ENCODE measurements at regions of chr9 and their contacts with region 1.

Region 1: GRCh38 chr9:134407123-134407808 is 81.0 kb downstream of the RXRA start:
- DNase-seq: peak; percentile 66 to 94
- H3K4me3 ChIP-seq: peak overlapping the region; percentile 27 to 54
- H3K27ac ChIP-seq: peak overlapping the region; percentile 74 to 82
- H3K4me1 ChIP-seq: peaks cover 58 to 77% of the 10 kb centered on the region in 2 donors
- H3K27me3 ChIP-seq: no peaks in the 10 kb centered on the region
- CTCF ChIP-seq: no peak

Region 2: GRCh38 chr9:134205672-134206310 is 201.5 kb before region 1 on chr9:
- intact Hi-C with region 1: no loop called
- DNase-seq: peak in 1 of 2 donors; percentile 86
- H3K4me3 ChIP-seq: no peak overlapping the region
- H3K27ac ChIP-seq: peak overlapping the region in 1 of 2 donors; percentile 59
- H3K4me1 ChIP-seq: peaks cover 0 to 24% of the 10 kb centered on the region in 2 donors
- H3K27me3 ChIP-seq: no peaks in the 10 kb centered on the region
- CTCF ChIP-seq: no peak

Region 3: DNA sequence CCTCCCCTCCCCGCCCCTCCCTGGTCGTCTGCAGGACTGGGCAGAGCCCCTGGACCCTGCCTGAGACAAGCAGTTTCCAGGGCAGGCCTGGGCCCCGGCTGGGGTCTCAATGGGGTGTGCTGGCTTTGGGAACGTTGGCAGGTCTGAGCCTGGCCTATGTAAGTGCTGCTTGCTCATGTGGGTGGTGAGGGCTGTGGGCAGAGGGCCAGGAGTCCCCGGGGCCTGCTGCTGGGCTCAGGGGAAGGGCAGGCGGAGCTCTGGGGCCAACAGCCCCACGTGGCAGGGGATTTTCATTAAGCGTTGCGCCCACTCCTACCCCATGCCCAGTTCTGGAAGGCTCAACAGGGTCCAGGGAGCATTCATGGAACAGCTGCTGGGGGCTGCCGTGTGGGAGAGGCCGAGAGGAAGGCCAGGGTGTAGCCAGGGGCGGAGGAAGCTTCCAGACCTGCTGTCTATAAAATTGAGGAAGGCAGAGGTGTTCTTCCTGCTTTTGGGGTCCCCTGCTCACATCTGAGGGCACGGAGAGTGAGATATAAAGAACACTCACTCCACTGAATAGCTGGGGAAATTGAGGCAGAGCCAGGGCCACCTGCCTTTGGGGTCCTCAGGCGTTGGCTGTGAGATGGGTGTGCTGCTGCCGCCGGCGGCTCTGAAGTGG is 48.5 kb before region 1 on chr9:
- intact Hi-C with region 1: loop called (anchors 1 kb)
- DNase-seq: no peak
- H3K4me3 ChIP-seq: no peak overlapping the region
- H3K27ac ChIP-seq: peak overlapping the region in 1 of 2 donors; percentile 72
- H3K4me1 ChIP-seq: peaks cover 26 to 56% of the 10 kb centered on the region in 2 donors
- H3K27me3 ChIP-seq: no peaks in the 10 kb centered on the region
- CTCF ChIP-seq: no peak

Region 4: DNA sequence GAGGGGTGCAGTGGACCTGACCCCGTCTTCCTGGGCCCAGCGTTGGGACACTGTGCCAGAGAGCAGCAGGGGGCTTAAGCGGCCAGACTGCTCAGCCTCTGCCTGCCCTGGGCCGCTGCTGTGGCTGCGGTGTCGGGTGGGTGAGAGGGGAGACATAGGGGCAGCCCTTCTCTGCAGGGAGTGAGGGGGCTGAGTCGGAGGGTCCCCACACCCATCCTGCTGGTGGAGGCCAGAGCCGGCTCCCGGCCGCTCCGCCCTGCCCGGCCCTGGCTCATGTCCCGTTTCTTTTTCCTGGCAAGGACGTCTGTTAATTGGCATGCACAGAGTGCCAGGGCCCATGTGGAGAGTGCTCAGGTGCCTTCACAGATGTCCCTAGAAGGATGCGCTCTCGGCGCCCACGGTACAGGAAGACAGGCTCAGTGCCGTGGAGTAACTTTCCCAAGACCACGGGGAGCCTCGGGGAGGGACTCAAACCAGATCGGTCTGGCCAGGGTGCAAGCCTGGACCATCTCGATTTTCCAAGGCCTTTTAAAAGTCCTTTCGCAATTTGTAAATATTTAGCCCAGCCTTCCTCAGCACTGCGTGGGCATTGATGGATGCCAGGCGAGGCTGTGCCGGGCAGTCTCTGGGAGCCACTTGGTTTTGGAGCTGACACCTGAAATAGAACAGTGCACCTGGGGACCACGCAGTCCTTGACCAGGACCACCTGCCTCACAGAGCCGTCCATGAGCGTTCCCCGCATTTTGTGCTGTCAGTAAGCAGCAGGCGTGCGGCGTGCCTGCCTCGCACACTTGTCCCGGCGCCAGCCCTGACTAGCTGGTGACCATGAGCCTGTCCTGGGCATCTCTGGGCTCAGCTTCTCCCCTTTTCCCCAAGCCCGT is 20.1 kb before region 1 on chr9:
- intact Hi-C with region 1: loop called (anchors 1 kb)
- DNase-seq: no peak
- H3K4me3 ChIP-seq: peak overlapping the region in 1 of 2 donors; percentile 26
- H3K27ac ChIP-seq: peak overlapping the region; percentile 69 to 75
- H3K4me1 ChIP-seq: peaks cover 5 to 34% of the 10 kb centered on the region in 2 donors
- H3K27me3 ChIP-seq: no peaks in the 10 kb centered on the region
- CTCF ChIP-seq: no peak

Region 5: DNA sequence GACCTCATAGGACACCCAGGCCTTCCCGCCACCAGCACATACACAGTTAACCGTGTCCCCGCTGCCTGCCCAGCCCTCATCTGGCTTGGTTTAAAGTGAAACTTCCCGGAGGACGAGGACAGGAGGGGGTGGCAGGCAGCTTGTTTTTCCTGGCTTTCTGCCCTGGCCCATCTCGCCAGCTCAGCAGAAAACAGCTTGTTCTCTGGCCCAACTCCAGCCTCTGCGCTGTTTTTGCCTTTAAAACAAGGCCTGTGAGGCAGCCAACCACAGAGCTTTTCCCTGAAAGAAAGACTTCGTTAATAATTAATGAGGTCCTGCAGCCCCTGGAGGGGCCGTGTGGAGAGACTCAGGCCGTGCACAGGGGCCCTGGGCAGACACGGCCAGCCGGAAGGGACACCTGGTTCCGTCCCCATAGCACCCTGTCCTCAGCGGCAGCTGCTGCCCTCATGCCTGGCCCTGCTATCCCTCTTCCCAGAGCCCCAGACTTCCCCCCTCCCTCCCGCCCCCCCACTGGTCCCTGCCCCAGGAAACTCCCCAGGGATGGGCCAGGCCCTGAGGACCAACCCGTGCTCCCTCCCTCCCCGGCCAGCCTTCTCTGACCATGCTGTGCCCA is 27.7 kb after region 1 on chr9:
- intact Hi-C with region 1: loop called (anchors 1 kb)
- DNase-seq: peak; percentile 67 to 97
- H3K4me3 ChIP-seq: peak overlapping the region in 1 of 2 donors; percentile 52
- H3K27ac ChIP-seq: peak overlapping the region; percentile 59 to 94
- H3K4me1 ChIP-seq: peaks cover 16 to 35% of the 10 kb centered on the region in 2 donors
- H3K27me3 ChIP-seq: no peaks in the 10 kb centered on the region
- CTCF ChIP-seq: no peak

Region 6: GRCh38 chr9:134818000-134818568 is 410.8 kb after region 1 on chr9:
- intact Hi-C with region 1: no loop called
- DNase-seq: no peak
- H3K4me3 ChIP-seq: no peak overlapping the region
- H3K27ac ChIP-seq: no peak overlapping the region
- H3K4me1 ChIP-seq: no peaks in the 10 kb centered on the region
- H3K27me3 ChIP-seq: no peaks in the 10 kb centered on the region
- CTCF ChIP-seq: no peak